A673 (cell line): ENCODE measurements at regions of chr13 and their contacts with region 1.

Region 1: DNA sequence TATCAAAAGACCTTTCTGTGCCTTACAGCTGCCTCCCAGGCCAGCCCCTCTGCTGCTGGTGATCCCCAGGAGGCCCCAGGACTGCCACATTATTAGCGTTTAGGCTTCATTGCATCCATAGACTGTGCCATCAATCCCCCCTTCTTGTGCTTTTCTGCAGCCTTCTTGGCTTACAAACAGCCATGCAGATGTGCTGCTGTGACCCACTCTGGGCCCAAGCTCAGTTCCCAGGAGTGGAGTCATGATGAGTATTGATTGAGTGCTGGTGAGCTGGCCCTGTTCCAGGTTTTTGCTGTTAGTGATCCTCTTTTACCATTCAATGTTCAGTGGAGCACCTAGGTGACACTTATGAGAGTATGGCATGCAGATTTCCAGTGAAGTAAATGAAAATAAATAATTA is 59.9 kb upstream of the SLAIN1 start:
- DNase-seq: no peak
- H3K4me3 ChIP-seq: no peak overlapping the region
- H3K27ac ChIP-seq: no peak overlapping the region
- H3K4me1 ChIP-seq: peaks cover 9% of the 10 kb centered on the region
- H3K27me3 ChIP-seq: no peaks in the 10 kb centered on the region
- CTCF ChIP-seq: no peak

Region 2: DNA sequence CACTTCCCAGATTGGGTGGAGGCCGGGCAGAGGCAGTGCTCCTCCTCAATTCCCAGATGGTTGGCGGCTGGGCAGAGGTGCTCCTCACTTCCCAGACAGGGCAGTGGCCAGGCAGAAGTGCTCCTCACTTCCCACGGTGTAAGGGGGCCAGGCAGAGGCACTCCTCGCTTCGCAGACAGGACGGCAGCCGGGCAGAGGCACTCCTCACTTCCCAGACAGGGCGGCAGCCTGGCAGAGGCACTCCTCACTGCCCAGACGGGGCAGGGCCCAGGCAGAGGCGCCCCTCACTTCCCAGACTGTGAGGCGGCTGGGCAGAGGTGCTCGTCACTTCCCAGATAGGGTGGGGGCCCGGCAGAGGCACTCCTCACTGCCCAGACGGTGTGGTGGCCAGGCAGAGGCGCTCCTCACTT is 23.3 kb after region 1 on chr13:
- CTCF ChIA-PET with region 1: no interaction called
- POLR2A ChIA-PET with region 1: no interaction called
- intact Hi-C with region 1: loop called (anchors 2 kb)
- DNase-seq: no peak
- H3K4me3 ChIP-seq: no peak overlapping the region
- H3K27ac ChIP-seq: no peak overlapping the region
- H3K4me1 ChIP-seq: no peaks in the 10 kb centered on the region
- H3K27me3 ChIP-seq: no peaks in the 10 kb centered on the region
- CTCF ChIP-seq: no peak